ENCODE measurements at regions of chr6 and their contacts with region 1.

Region 1: GRCh38 chr6:16657768-16658167 is 103.5 kb downstream of the ATXN1 start:
- DNase-seq: peak; percentile 75
- H3K4me3 Mint-ChIP-seq: peak overlapping the region; percentile 50
- H3K27ac Mint-ChIP-seq: peak overlapping the region; percentile 83
- H3K4me1 Mint-ChIP-seq: peaks cover 67% of the 10 kb centered on the region
- H3K27me3 Mint-ChIP-seq: no peaks in the 10 kb centered on the region

Region 2: DNA sequence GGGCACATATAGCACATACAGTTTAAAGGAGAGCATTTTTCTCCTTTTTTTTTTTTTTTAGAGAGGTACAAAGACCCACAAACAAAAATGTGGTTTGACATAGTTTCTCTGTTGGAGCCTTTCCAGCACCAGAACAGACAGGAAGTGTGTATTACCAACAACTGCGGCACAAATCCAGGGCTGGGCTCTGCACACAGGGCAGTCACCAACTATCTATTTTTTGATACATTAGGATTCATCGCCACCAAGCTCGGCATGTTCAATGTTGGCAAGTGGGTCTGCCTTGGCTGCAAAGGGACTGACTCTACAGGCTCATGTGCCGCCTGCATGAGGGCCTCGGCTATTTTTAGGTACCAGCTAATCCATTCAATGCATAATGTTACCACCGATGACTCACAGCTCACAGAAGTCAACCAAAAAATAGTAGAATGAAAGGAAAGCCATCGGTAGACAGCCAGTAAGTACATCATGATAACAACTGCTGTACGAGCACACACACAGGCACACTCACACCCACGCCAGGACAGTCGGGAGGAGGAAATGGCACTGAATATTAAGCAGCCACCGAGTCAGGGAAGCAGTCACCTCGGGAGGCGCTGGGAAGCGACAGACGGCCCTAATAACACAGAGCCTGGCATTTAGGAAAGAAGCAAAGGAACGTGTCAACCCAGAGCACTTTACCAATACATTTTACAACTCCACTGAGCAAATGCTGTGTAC is 337.8 kb before region 1 on chr6:
- intact Hi-C with region 1: loop called (anchors 5 kb)
- DNase-seq: peak; percentile 90
- H3K4me3 Mint-ChIP-seq: peak overlapping the region; percentile 73
- H3K27ac Mint-ChIP-seq: peak overlapping the region; percentile 84
- H3K4me1 Mint-ChIP-seq: peaks cover 66% of the 10 kb centered on the region
- H3K27me3 Mint-ChIP-seq: no peaks in the 10 kb centered on the region

Region 3: DNA sequence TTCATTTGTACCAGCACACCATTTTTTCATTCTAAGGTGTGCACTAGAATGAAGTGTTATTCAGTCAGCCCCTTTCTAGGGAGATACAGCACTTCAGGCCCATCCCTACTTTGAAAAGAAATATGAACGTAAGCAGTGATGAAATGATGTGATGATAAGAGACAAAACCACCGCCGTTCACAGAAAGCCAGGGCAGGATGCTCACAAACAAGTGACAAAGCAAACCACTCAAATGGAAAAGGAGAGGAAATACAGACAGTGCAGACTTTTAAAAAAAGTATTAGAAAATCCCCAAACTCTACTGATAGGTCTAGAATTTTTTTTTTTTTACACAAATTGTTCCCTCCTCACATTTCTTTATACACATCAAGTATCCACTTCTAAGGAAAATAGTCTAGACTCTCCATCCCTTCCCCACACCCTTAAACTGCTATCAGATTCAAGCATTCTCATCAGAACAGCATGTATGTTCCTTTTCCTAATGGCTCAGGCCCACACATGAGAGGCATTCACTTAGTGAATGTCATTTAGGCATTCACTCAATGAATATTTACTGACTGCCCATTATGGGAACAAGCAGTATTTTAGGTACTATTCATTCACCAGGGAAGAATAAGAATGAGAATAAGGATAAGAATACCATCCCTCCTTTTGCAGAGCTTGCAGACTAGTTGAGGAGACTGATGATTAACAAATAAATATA is 175.9 kb before region 1 on chr6:
- intact Hi-C with region 1: loop called (anchors 2 kb)
- DNase-seq: peak; percentile 92
- H3K4me3 Mint-ChIP-seq: peak overlapping the region; percentile 54
- H3K27ac Mint-ChIP-seq: peak overlapping the region; percentile 99
- H3K4me1 Mint-ChIP-seq: peaks cover 82% of the 10 kb centered on the region
- H3K27me3 Mint-ChIP-seq: no peaks in the 10 kb centered on the region

Region 4: DNA sequence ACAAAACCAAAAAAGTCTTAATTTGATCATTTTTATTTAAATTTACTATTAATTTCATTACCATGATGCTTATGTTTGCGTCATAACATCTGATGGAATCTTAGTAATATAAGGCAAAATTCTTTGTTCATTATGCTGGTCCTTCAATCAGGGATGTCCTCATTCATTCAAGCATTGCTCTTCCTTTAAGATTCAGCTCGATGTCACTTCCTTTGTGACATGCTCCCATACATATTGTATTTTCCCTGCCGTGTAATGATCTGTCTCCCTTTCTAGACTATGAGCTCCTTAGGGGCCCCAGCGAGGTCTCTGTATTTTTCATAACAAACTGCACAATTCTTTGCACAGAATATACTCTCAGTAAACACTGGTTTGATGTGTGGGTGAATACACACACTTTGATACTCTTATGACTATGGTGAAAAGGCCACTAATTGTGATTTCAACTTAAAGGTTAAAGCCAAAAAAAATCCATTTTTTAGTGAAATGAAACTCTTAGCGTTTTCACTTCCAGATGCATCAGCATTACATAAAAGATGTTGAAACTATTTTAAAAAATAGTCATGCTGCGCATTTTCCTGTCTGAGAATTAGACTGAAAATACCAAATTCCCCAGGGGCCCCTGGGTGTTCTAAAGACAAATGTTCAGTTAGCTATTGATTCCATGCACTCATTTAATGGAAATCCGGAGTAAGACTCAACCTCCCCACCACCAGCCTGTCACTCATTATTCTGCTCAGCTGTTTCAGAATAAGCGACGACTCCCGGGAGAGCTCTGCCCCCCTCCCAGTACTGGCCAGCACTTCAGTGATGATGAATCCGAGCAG is 66.2 kb before region 1 on chr6:
- intact Hi-C with region 1: loop called (anchors 2 kb)
- DNase-seq: no peak
- H3K4me3 Mint-ChIP-seq: peak overlapping the region; percentile 16
- H3K27ac Mint-ChIP-seq: peak overlapping the region; percentile 87
- H3K4me1 Mint-ChIP-seq: peaks cover 24% of the 10 kb centered on the region
- H3K27me3 Mint-ChIP-seq: no peaks in the 10 kb centered on the region

Region 5: GRCh38 chr6:16684896-16685554 is 27.3 kb after region 1 on chr6:
- intact Hi-C with region 1: loop called (anchors 1 kb)
- DNase-seq: peak; percentile 89
- H3K4me3 Mint-ChIP-seq: peak overlapping the region; percentile 67
- H3K27ac Mint-ChIP-seq: peak overlapping the region; percentile 92
- H3K4me1 Mint-ChIP-seq: peaks cover 82% of the 10 kb centered on the region
- H3K27me3 Mint-ChIP-seq: no peaks in the 10 kb centered on the region

Region 6: DNA sequence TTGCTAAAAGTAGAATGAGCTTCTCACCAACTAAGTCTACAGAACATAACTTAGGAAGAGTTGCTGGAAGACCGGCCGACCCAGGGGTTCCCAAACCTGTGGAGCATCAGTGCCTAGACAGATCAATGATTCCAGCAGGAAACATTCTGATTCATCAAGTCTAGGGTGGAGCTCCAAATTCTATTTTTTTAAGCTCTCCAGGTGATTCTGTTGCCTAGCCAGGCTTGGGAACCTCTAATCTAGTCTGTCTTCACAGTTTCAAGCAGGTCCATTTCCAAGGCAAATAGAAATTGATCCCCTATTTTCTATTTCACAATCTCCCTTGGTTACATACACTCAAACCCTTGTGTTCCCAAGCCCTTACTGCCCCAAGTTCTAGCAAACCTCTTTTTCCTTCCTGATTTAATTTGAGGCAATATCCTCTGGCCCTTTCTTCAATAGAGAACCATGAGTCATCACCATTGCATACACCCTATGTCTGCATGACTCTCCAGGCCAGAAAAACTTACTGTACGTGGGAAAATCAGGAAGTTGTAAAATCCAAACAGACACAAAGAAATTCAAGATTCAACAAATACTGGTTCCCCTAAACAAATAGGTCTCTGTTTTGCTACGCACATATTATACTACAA is 94.6 kb after region 1 on chr6:
- intact Hi-C with region 1: no loop called
- DNase-seq: no peak
- H3K4me3 Mint-ChIP-seq: no peak overlapping the region
- H3K27ac Mint-ChIP-seq: no peak overlapping the region
- H3K4me1 Mint-ChIP-seq: peaks cover 60% of the 10 kb centered on the region
- H3K27me3 Mint-ChIP-seq: no peaks in the 10 kb centered on the region

Region 7: DNA sequence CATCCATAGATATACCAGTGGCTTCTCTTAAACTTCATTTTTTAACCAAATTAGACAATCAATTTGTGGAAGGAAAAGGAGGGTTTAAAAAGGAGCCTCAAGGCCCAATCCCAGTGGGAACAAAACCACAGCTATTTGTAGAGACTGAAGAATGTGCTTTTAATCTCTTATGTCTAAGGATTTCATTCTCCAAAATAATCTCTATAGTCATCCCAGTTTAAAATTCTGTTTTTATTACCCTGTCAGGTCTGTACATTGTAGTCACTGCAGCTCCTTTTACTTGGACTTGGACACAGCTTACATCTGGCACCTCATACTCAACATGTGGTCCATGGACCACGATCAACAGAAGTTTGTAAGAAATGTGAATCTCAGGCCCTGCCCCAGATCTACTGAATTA is 291.9 kb after region 1 on chr6:
- intact Hi-C with region 1: loop called (anchors 5 kb)
- DNase-seq: no peak
- H3K4me3 Mint-ChIP-seq: no peak overlapping the region
- H3K27ac Mint-ChIP-seq: no peak overlapping the region
- H3K4me1 Mint-ChIP-seq: peaks cover 19% of the 10 kb centered on the region
- H3K27me3 Mint-ChIP-seq: peaks cover 22% of the 10 kb centered on the region

Measured in activated CD4-positive, alpha-beta T cell treated with anti-CD3 and anti-CD28 coated beads, Interleukin-2, amount 10 ng/mL, durations not matched to agents 24 days and 14 days (primary cell).